ENCODE measurements at regions of chr1 and their contacts with region 1.

Region 1: GRCh38 chr1:102531036-102531435 is 534.3 kb upstream of the OLFM3 start:
- DNase-seq: no peak
- ATAC-seq: no peak
- H3K4me3 ChIP-seq: no peak overlapping the region
- H3K4me3 Mint-ChIP-seq: no peak overlapping the region
- H3K27ac ChIP-seq: no peak overlapping the region
- H3K27ac Mint-ChIP-seq: no peak overlapping the region
- H3K4me1 ChIP-seq: no peaks in the 10 kb centered on the region
- H3K4me1 Mint-ChIP-seq: no peaks in the 10 kb centered on the region
- H3K27me3 ChIP-seq: no peaks in the 10 kb centered on the region
- H3K27me3 Mint-ChIP-seq: no peaks in the 10 kb centered on the region
- CTCF ChIP-seq: no peak

Region 2: GRCh38 chr1:102546251-102546650 is 15.2 kb after region 1 on chr1:
- CTCF ChIA-PET with region 1: no interaction called
- POLR2A ChIA-PET with region 1: no interaction called
- intact Hi-C with region 1: loop called (anchors 2 kb)
- DNase-seq: no peak
- ATAC-seq: no peak
- H3K4me3 ChIP-seq: no peak overlapping the region
- H3K4me3 Mint-ChIP-seq: no peak overlapping the region
- H3K27ac ChIP-seq: no peak overlapping the region
- H3K27ac Mint-ChIP-seq: no peak overlapping the region
- H3K4me1 ChIP-seq: no peaks in the 10 kb centered on the region
- H3K4me1 Mint-ChIP-seq: no peaks in the 10 kb centered on the region
- H3K27me3 ChIP-seq: no peaks in the 10 kb centered on the region
- H3K27me3 Mint-ChIP-seq: no peaks in the 10 kb centered on the region
- CTCF ChIP-seq: no peak

Measured in B cell (primary cell).